ENCODE measurements at regions of chr17 and their contacts with region 1.

Region 1: DNA sequence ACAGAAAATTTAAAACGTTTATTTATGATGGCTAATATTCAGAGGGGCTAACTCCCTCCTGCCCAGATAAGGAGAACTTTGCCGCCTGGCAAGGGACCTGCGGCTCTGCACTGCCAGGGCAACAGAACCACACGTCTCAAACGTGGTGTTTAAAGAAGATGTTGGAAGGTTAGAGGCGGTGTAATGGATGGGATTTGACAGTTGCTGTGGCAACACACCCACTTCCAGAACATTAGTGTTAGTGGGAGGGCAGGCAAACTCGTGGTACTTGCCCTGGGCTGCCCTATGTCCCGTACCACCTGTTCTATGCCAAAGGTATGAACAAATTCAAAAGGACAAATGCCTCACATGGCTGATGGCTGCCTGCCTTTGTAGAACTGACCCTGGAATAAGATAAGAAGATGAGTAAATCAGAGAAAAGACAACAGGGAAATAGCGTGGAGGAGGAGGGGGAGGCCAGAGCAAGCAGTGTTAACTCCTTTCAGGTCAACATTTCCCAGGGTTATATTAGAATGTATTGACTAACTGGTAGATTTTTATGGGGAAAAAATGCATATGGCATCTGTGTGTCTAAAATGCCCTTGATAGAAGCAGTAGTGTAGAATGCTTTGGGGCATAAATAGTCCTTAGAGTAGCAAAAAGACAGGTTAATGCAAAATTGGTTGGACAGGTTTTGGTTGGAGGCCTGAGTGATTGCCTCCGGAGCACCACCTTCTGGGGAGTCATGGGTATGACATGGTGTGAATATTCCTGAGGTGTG is 30.8 kb downstream of the HLF start:
- DNase-seq: peak; percentile 71 to 82 (median 78)
- ATAC-seq: peak; percentile 96
- H3K4me3 ChIP-seq: no peak overlapping the region
- H3K27ac ChIP-seq: no peak overlapping the region
- H3K4me1 ChIP-seq: no peaks in the 10 kb centered on the region
- H3K27me3 ChIP-seq: peaks cover 0 to 4% of the 10 kb centered on the region in 2 experiments; a peak in 1 of 5 replicates
- CTCF ChIP-seq: peak; percentile 75 to 82 (median 80)
- EP300 ChIP-seq: no peak
- POLR2A ChIP-seq: no peak
- RAD21 ChIP-seq: peak; percentile 66 to 82

Region 2: DNA sequence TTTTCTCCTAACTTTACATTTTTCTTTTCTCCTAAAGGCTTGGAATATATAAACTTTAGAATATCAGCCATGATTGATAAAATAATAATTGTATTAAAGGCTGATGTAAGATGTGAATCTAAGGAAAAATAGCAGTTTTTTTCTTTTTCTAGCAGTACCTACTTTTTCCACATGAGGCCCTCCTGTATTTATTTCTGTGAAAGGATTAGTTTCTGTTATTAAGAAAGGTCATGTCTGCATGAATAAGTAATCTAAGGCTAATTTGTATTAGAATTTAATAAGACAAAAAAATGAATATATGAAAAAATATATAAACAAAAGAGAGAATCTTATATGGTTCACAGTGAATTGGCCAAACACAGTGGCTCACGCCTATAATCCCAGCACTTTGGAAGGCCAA is 241.7 kb before region 1 on chr17:
- CTCF ChIA-PET with region 1: interaction called, 3 read pairs
- POLR2A ChIA-PET with region 1: no interaction called
- in situ Hi-C with region 1: no loop called
- intact Hi-C with region 1: loop called (anchors 5 kb)
- DNase-seq: no peak
- ATAC-seq: no peak
- H3K4me3 ChIP-seq: no peak overlapping the region
- H3K27ac ChIP-seq: no peak overlapping the region
- H3K4me1 ChIP-seq: peaks cover 0 to 3% of the 10 kb centered on the region in 2 experiments; a peak in 1 of 5 replicates
- H3K27me3 ChIP-seq: no peaks in the 10 kb centered on the region
- CTCF ChIP-seq: peak in 1 of 3 experiments; percentile 53; a peak in 3 of 6 replicates
- EP300 ChIP-seq: no peak
- POLR2A ChIP-seq: no peak
- RAD21 ChIP-seq: peak; percentile 41 to 58

Region 3: DNA sequence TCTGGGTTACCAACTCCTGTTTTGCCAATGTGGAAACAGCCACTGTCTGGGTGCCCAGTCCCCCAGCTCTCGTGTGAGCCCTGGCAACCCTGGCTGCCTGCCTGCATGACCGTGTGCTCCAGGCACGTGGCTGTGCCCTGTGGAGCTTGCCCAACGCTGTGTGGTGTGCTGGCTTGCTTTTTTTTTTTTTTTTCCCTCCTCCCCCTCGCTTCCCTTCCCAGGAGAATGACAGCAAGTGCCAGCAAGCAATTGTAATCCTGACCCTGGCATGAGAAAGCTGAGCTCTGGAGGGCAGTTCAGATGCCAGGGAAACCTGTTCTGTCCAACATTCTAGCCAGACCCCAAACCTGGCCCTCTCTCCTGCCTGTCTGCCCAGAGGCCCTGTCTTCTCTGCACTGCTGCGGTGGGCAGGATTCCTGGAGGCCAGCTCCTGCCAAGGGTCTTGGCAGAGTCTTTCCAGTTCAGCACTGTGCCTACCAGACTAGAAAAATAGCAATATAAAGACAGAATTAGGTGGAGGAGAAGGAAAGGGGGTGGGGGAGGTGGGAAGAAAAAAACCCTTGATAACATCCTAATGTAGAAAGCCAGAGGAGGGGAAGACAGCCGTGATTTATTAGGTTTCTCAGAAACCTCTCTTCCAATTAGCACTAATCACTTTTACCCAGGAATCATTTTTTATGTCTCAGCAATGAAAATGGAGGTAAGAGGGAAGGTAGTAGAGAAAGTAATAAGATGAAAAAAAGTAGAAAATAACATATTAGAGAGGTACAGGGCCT is 21.8 kb before region 1 on chr17:
- CTCF ChIA-PET with region 1: no interaction called
- POLR2A ChIA-PET with region 1: no interaction called
- in situ Hi-C with region 1: no loop called
- intact Hi-C with region 1: no loop called
- DNase-seq: no peak
- ATAC-seq: no peak
- H3K4me3 ChIP-seq: no peak overlapping the region
- H3K27ac ChIP-seq: no peak overlapping the region
- H3K4me1 ChIP-seq: 0 out of 5 replicates have a peak, but pooled peaks cover 0 to 3% of the 10 kb centered on the region in 2 experiments
- H3K27me3 ChIP-seq: peaks cover 0 to 11% of the 10 kb centered on the region in 2 experiments; a peak in 2 of 5 replicates
- CTCF ChIP-seq: no peak
- EP300 ChIP-seq: no peak
- POLR2A ChIP-seq: no peak
- RAD21 ChIP-seq: no peak

Region 4: DNA sequence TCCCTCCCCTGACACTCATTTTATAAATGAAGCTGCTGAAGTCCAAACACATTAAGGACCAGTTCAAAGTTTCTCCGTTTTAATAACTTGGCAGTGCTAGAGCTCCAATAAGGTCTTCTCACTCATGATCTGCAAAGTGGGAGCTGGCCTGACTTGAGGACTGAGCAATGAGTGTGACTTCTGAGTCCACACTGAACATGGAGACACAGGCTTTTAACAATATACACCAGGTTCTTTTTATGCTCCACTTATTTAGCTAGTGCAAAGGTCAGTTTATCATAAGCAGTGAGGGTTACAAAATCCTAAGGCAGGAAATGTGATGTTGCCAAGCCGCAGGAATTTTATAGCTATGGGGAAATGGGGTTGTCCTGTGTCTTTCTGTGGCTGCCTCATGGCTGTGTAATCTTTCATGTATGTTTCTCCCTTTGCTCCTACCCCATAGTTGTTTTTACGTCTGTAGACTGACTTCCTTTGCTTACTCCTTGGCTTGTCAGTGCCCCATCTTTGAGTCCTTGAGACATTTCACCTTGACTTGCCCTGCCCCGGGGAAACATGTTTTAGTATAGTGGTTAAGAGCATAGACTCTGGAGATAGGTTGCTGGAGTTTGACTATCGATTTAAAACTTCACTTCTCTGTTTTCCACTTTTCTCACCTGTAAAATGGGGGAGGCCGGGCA is 138.2 kb after region 1 on chr17:
- CTCF ChIA-PET with region 1: no interaction called
- POLR2A ChIA-PET with region 1: no interaction called
- in situ Hi-C with region 1: no loop called
- intact Hi-C with region 1: no loop called
- DNase-seq: no peak
- ATAC-seq: peak; percentile 49; the same call in 2 of the 3 replicates
- H3K4me3 ChIP-seq: no peak overlapping the region
- H3K27ac ChIP-seq: no peak overlapping the region
- H3K4me1 ChIP-seq: peaks cover 0 to 22% of the 10 kb centered on the region in 2 experiments; a peak in 3 of 5 replicates
- H3K27me3 ChIP-seq: no peaks in the 10 kb centered on the region
- CTCF ChIP-seq: no peak
- EP300 ChIP-seq: no peak
- POLR2A ChIP-seq: no peak
- RAD21 ChIP-seq: no peak

Measured in K562 (cell line).